Caco-2 (cell line): ENCODE measurements at regions of chr22 and their contacts with region 1.

Region 1: GRCh38 chr22:17501679-17502285 is 61.5 kb upstream of the SLC25A18 start:
- DNase-seq: peak in 1 of 2 experiments; percentile 64
- H3K4me3 ChIP-seq: no peak overlapping the region
- H3K4me3 Mint-ChIP-seq: no peak overlapping the region
- H3K27ac Mint-ChIP-seq: no peak overlapping the region
- H3K4me1 ChIP-seq: no peaks in the 10 kb centered on the region
- H3K4me1 Mint-ChIP-seq: no peaks in the 10 kb centered on the region
- H3K27me3 ChIP-seq: no peaks in the 10 kb centered on the region
- H3K27me3 Mint-ChIP-seq: peaks cover 3% of the 10 kb centered on the region
- CTCF ChIP-seq: peak; percentile 62 to 64

Region 2: GRCh38 chr22:16917144-16918003 is 584.4 kb before region 1 on chr22:
- CTCF ChIA-PET with region 1: interaction called, 3 read pairs
- POLR2A ChIA-PET with region 1: no interaction called
- intact Hi-C with region 1: loop called (anchors 10 kb)
- DNase-seq: peak; percentile 75 to 77
- H3K4me3 ChIP-seq: no peak overlapping the region
- H3K4me3 Mint-ChIP-seq: no peak overlapping the region
- H3K27ac Mint-ChIP-seq: no peak overlapping the region
- H3K4me1 ChIP-seq: no peaks in the 10 kb centered on the region
- H3K4me1 Mint-ChIP-seq: no peaks in the 10 kb centered on the region
- H3K27me3 ChIP-seq: no peaks in the 10 kb centered on the region; the same call in 1 of the 2 replicates
- H3K27me3 Mint-ChIP-seq: peaks cover 10% of the 10 kb centered on the region
- CTCF ChIP-seq: peak; percentile 68 to 80

Region 3: GRCh38 chr22:17171313-17172171 is 330.2 kb before region 1 on chr22:
- CTCF ChIA-PET with region 1: interaction called, 90 read pairs
- POLR2A ChIA-PET with region 1: interaction called, 7 read pairs
- intact Hi-C with region 1: loop called (anchors 1 kb)
- DNase-seq: peak; percentile 89 to 94
- H3K4me3 ChIP-seq: peak overlapping the region; percentile 69
- H3K4me3 Mint-ChIP-seq: peak overlapping the region; percentile 89
- H3K27ac Mint-ChIP-seq: peak overlapping the region; percentile 84
- H3K4me1 ChIP-seq: 0 out of 2 replicates have a peak, but pooled peaks cover 3% of the 10 kb centered on the region
- H3K4me1 Mint-ChIP-seq: peaks cover 7% of the 10 kb centered on the region
- H3K27me3 ChIP-seq: no peaks in the 10 kb centered on the region
- H3K27me3 Mint-ChIP-seq: peaks cover 5% of the 10 kb centered on the region
- CTCF ChIP-seq: peak; percentile 65 to 93

Region 4: DNA sequence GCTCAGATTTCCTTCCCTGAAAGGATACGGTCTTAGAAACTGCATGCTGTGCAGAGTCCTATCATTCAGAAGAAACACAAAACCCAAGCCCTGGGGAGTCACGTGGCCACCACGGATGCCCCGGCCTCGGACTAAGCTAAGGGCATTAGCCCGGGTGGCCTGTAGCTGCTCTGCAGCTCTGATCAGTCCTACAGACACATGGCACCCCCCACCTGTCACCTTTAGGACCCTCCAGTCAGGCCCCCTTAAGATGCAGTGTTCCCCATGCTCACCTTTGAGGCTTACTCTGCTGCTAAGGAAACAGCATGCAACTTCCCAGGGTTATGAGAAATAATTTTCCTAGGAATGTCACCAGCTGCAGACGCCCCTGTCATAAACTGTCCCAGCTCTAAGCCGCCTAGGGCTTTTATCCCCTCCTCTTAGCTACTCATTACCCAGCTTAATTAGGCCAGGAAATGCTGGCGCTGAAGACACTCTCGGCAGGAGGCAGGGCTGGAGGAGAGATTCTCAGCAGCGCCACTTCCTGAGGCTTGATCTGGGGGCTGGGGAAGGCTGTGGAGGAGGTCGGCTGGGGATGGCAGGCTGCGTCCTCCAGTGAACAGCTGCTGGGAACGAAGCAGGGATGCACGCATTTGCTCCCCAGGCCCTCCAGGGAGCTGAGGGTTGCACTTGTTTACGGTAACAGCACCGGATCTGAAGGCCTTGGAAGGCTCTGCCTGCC is 235.4 kb before region 1 on chr22:
- CTCF ChIA-PET with region 1: interaction called, 13 read pairs
- POLR2A ChIA-PET with region 1: no interaction called
- intact Hi-C with region 1: no loop called
- DNase-seq: peak; percentile 76 to 87
- H3K4me3 ChIP-seq: peak overlapping the region; percentile 31
- H3K4me3 Mint-ChIP-seq: peak overlapping the region; percentile 69
- H3K27ac Mint-ChIP-seq: peak overlapping the region; percentile 90
- H3K4me1 ChIP-seq: peaks cover 37% of the 10 kb centered on the region
- H3K4me1 Mint-ChIP-seq: peaks cover 21% of the 10 kb centered on the region
- H3K27me3 ChIP-seq: no peaks in the 10 kb centered on the region
- H3K27me3 Mint-ChIP-seq: no peaks in the 10 kb centered on the region
- CTCF ChIP-seq: no peak

Region 5: GRCh38 chr22:17451316-17451715 is 50.5 kb before region 1 on chr22:
- CTCF ChIA-PET with region 1: interaction called, 5 read pairs
- POLR2A ChIA-PET with region 1: no interaction called
- intact Hi-C with region 1: loop called (anchors 2 kb)
- DNase-seq: peak; percentile 12 to 37
- H3K4me3 ChIP-seq: no peak overlapping the region
- H3K4me3 Mint-ChIP-seq: no peak overlapping the region
- H3K27ac Mint-ChIP-seq: peak overlapping the region; percentile 34
- H3K4me1 ChIP-seq: peaks cover 17% of the 10 kb centered on the region; the same call in 1 of the 2 replicates
- H3K4me1 Mint-ChIP-seq: peaks cover 10% of the 10 kb centered on the region
- H3K27me3 ChIP-seq: no peaks in the 10 kb centered on the region
- H3K27me3 Mint-ChIP-seq: no peaks in the 10 kb centered on the region
- CTCF ChIP-seq: no peak